Adrenal gland (tissue), 19 donors: ENCODE measurements at regions of chr15 and their contacts with region 1.

Region 1: GRCh38 chr15:31326156-31326732 is 391 bp upstream of the KLF13 start:
- DNase-seq: peak; percentile 97 to 99 (median 98)
- H3K4me3 ChIP-seq: peak overlapping the region; percentile 42 to 99 (median 70)
- H3K27ac ChIP-seq: peak overlapping the region; percentile 73 to 100 (median 98)
- H3K4me1 ChIP-seq: peaks cover 13 to 32% of the 10 kb centered on the region in 2 donors
- H3K27me3 ChIP-seq: no peaks in the 10 kb centered on the region
- CTCF ChIP-seq: no peak
- POLR2A ChIP-seq: peak; percentile 88 to 89

Region 2: DNA sequence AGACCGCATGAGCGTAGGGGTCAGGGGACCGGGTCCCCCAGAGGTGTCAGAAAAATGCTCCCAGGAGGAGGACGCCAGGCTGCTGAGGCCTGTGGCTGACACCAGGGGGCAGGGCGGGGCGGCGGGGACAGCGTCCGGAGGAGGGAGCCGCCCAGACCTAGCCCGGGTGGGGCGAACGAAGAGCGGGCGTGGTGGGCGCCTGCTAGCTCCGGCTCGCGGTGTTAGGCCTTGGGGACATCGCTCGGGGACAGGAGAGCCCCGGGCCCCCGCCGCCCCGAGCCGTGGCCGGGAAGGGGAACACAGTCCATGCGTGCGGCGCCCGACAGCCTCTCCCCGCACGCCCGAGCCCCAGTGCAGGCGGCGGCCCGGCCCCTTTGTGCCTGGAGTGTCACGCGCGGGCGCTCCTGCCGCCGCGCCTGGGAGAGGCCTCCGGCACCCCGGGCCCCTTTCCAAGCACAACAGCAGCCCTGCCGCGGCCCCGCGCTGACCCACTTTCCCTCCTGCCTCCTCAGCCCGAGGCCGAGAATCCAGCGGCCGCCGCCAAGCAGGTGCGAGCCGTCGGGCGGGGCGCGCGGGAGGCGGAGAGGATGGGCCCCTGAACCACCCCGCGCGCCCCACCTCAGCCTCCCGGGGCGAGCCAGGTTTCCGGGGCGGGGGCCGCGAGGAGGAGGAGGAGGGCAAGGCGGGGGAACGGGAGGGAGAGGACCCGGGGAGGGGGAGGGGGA is 110.6 kb before region 1 on chr15:
- intact Hi-C with region 1: loop called in 1 of 2 experiments (anchors 5 kb)
- DNase-seq: peak; percentile 71 to 83 (median 77)
- H3K4me3 ChIP-seq: peak overlapping the region in 2 of 4 donors; percentile 20 to 71
- H3K27ac ChIP-seq: peak overlapping the region; percentile 26 to 90 (median 82)
- H3K4me1 ChIP-seq: peaks cover 0 to 15% of the 10 kb centered on the region in 2 donors
- H3K27me3 ChIP-seq: no peaks in the 10 kb centered on the region
- CTCF ChIP-seq: peak; percentile 68 to 92 (median 82)
- POLR2A ChIP-seq: peak in 1 of 2 donors; percentile 59

Region 3: DNA sequence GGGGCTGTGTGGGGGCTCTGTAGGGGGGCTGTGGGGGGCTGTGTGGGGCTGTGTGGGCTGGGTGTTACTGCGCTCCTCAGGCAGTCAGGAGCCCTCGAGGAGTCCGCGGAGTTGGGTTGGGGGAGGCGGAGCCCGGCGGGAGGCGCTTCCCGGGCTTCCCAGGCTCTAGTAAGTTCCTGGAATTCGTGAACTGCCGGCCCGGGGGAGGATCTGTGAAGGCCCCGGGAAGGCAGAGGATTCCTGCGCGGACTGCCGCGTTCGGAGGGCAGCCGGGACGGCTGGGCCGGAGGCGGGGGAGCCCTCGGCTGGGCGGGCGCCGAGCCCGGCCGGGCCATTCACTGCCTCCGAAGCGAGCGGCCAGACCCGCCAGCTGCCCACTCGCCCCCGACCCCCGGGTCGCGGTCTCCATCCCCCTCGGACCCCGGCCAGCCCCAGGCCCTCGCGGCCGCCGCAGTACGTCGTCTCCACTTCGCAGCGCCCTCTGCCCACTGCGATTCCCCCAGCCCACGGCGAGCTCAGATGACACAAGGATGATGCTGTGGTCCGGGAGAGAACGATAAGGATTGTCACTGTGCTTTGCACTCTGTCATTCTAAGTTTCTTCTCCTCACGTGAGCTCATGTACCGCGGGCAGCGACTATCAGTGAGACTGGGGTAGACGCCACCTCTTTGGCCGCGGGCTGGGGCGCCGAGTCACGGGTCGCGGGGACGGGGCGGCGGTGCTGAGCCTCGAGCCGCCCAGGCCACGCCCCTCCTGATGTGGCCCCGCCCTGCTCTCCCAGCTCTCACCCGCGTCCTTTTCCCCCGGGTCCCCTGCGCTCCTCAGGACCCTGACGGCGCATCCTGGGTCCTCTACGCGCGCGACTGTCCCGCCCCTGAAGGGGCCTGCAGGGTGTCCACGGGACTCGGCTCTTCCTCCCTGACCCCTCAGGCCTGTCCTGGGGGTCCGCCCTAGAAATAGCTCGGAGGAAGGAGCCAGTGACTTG is 65.7 kb after region 1 on chr15:
- intact Hi-C with region 1: loop called in 1 of 2 experiments (anchors 5 kb)
- DNase-seq: peak; percentile 80 to 92 (median 83)
- H3K4me3 ChIP-seq: peak overlapping the region; percentile 48 to 70 (median 56)
- H3K27ac ChIP-seq: peak overlapping the region; percentile 60 to 98 (median 85)
- H3K4me1 ChIP-seq: peaks cover 0 to 16% of the 10 kb centered on the region in 2 donors
- H3K27me3 ChIP-seq: no peaks in the 10 kb centered on the region
- CTCF ChIP-seq: no peak
- POLR2A ChIP-seq: peak; percentile 73 to 76

Region 4: DNA sequence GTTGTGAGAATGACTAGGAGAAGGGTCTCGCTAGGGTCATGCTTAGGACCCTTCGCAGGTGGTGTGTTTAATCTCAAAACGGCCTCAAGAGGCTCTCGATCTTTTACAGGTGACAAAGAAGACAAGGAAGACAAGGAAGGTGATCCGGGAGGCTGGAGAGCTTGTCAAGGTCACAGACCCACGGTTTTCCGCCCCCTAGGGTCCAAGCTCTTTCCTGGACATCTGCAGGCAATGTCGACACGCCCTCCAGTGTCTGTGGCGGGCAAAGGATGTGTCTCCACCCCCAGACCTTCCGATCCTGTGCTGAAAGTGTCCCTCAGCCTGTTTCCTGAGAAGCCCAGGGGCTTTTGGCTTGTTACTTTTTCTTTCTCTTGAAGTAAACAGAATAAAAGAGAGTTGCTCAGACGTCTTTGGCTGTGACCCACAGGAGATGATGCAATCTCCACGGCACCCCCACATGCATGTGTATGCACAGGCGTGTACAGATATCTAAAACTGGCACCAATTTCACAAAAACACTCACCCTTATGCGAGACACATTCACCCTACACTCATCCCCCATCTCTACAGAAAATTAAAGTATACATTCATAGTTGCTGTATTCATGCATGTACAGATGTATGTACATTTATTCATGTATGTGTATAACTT is 109.1 kb after region 1 on chr15:
- intact Hi-C with region 1: loop called in 1 of 2 experiments (anchors 10 kb)
- DNase-seq: peak; percentile 56 to 92 (median 73)
- H3K4me3 ChIP-seq: no peak overlapping the region
- H3K27ac ChIP-seq: peak overlapping the region in 4 of 5 donors; percentile 2 to 83 (median 42)
- H3K4me1 ChIP-seq: peaks cover 0 to 15% of the 10 kb centered on the region in 2 donors
- H3K27me3 ChIP-seq: no peaks in the 10 kb centered on the region
- CTCF ChIP-seq: peak; percentile 32 to 87 (median 68)
- POLR2A ChIP-seq: no peak

Region 5: GRCh38 chr15:31488426-31489204 is 162.4 kb after region 1 on chr15:
- intact Hi-C with region 1: loop called in 1 of 2 experiments (anchors 5 kb)
- DNase-seq: peak; percentile 50 to 87 (median 74)
- H3K4me3 ChIP-seq: no peak overlapping the region
- H3K27ac ChIP-seq: peak overlapping the region in 3 of 5 donors; percentile 2 to 49 (median 35)
- H3K4me1 ChIP-seq: peaks cover 0 to 15% of the 10 kb centered on the region in 2 donors
- H3K27me3 ChIP-seq: peaks cover 6% of the 10 kb centered on the region
- CTCF ChIP-seq: peak; percentile 89 to 99 (median 96)
- POLR2A ChIP-seq: peak in 1 of 2 donors; percentile 23